ENCODE measurements at regions of chr6 and their contacts with region 1.

Region 1: DNA sequence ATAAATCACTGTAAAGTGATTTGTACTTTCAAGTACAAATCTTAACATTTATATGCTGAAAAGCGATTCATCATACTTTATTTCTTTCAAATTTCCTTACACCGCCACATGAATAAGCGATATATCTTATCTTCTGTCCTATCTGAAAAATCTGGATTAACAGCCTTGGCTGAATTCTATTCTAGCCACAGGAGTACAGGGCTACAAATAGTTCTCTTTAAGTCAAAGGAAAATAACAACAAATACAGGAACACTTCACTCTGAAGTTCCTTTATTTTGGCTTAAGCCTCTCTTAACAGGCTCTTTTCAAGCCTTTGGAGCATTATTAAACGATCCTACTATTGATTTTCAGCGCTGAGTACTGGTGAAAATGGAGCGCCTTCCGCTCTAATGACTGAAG is 62.6 kb upstream of the ARID1B start:
- DNase-seq: no peak
- ATAC-seq: no peak

Region 2: DNA sequence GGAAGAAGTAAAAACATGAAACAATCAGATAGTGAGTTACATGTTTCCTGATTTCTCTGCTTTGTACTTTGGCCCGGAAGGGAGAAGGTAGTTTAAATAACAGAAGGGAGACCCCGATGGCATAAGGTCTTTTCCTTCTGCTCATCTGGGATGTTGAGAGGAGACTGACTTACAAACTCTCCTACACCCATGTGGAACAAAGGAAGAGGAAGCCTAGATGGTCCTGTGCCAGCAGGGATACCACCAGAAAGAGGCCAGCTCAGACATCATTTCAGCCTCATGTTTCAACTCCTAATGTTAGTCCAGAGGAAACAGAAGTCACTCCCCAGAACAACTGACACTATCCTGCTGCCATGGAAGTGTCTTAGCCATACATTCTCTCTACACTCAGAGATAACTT is 1008.3 kb before region 1 on chr6:
- intact Hi-C with region 1: no loop called
- DNase-seq: no peak
- ATAC-seq: no peak

Region 3: GRCh38 chr6:156639009-156639721 is 75.5 kb before region 1 on chr6:
- intact Hi-C with region 1: loop called (anchors 2 kb)
- DNase-seq: no peak
- ATAC-seq: no peak

Measured in sciatic nerve (tissue), 2 donors.